ENCODE measurements at regions of chr2 and their contacts with region 1.

Region 1: GRCh38 chr2:229800997-229801754 is 86.8 kb upstream of the DNER start:
- DNase-seq: peak; percentile 31 to 87 (median 68)
- ATAC-seq: peak; percentile 60 to 73 (median 66)
- H3K4me3 ChIP-seq: no peak overlapping the region
- H3K4me3 Mint-ChIP-seq: no peak overlapping the region
- H3K27ac ChIP-seq: no peak overlapping the region
- H3K27ac Mint-ChIP-seq: peak overlapping the region in 1 of 2 donors; percentile 17
- H3K4me1 ChIP-seq: no peaks in the 10 kb centered on the region
- H3K4me1 Mint-ChIP-seq: peaks cover 0 to 3% (median 2%) of the 10 kb centered on the region in 3 donors
- H3K27me3 ChIP-seq: no peaks in the 10 kb centered on the region
- H3K27me3 Mint-ChIP-seq: no peaks in the 10 kb centered on the region

Region 2: DNA sequence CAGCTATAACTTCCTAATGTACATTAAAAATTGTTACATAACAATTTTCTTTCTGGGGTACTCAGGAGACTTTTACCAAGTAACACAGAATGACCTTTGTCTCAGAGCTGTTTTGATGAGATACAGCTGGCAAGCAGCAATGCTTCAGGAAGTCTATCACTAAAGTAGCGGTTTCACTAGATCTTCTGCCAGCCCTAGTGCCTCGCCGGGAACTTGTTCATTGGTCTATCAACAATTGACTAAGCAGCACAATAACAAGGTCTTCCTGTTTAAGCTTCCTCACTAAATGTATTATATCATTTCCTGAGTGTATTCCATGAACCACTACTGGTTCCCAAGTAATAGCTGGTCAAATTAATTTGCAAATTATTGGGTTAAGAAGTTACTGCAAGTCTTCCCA is 51.4 kb after region 1 on chr2:
- CTCF ChIA-PET with region 1: interaction called in 1 of 2 experiments, 10 read pairs
- POLR2A ChIA-PET with region 1: no interaction called
- DNase-seq: peak; percentile 24 to 73 (median 54)
- ATAC-seq: peak; percentile 96 to 99 (median 99)
- H3K4me3 ChIP-seq: no peak overlapping the region
- H3K4me3 Mint-ChIP-seq: peak overlapping the region in 2 of 3 donors; percentile 4 to 28
- H3K27ac ChIP-seq: peak overlapping the region; percentile 58
- H3K27ac Mint-ChIP-seq: peak overlapping the region; percentile 86 to 91
- H3K4me1 ChIP-seq: peaks cover 27 to 30% of the 10 kb centered on the region in 2 experiments
- H3K4me1 Mint-ChIP-seq: peaks cover 51 to 80% (median 77%) of the 10 kb centered on the region in 3 donors
- H3K27me3 ChIP-seq: no peaks in the 10 kb centered on the region
- H3K27me3 Mint-ChIP-seq: no peaks in the 10 kb centered on the region

Region 3: GRCh38 chr2:229910832-229911412 is 109.7 kb after region 1 on chr2:
- CTCF ChIA-PET with region 1: interaction called, 4 to 67 read pairs
- POLR2A ChIA-PET with region 1: no interaction called
- DNase-seq: peak in 11 of 35 experiments; percentile 6 to 60 (median 17)
- ATAC-seq: peak; percentile 63 to 79 (median 74)
- H3K4me3 ChIP-seq: no peak overlapping the region
- H3K4me3 Mint-ChIP-seq: peak overlapping the region in 1 of 3 donors; percentile 6
- H3K27ac ChIP-seq: no peak overlapping the region
- H3K27ac Mint-ChIP-seq: peak overlapping the region; percentile 20 to 66
- H3K4me1 ChIP-seq: peaks cover 10 to 15% of the 10 kb centered on the region in 2 experiments
- H3K4me1 Mint-ChIP-seq: peaks cover 61 to 73% (median 64%) of the 10 kb centered on the region in 3 donors
- H3K27me3 ChIP-seq: no peaks in the 10 kb centered on the region
- H3K27me3 Mint-ChIP-seq: no peaks in the 10 kb centered on the region